Activated B cell treated with CpG ODN at 0.5 μM for 24 hours (primary cell): ENCODE measurements at regions of chr22 and their contacts with region 1.

Region 1: GRCh38 chr22:23838681-23839468 is at the start of gene DERL3:
- DNase-seq: peak; percentile 95
- ATAC-seq: peak; percentile 82
- H3K4me3 Mint-ChIP-seq: peak within 1 kb of the TSS; percentile 88
- H3K27ac Mint-ChIP-seq: peak within 1 kb of the TSS; percentile 95
- H3K4me1 Mint-ChIP-seq: peaks cover 75% of the 10 kb centered on the region
- H3K27me3 Mint-ChIP-seq: no peaks in the 10 kb centered on the region
- CTCF ChIP-seq: no peak
- total RNA-seq, gene DERL3: 15.4 and 18.3 TPM in 2 replicates

Region 2: DNA sequence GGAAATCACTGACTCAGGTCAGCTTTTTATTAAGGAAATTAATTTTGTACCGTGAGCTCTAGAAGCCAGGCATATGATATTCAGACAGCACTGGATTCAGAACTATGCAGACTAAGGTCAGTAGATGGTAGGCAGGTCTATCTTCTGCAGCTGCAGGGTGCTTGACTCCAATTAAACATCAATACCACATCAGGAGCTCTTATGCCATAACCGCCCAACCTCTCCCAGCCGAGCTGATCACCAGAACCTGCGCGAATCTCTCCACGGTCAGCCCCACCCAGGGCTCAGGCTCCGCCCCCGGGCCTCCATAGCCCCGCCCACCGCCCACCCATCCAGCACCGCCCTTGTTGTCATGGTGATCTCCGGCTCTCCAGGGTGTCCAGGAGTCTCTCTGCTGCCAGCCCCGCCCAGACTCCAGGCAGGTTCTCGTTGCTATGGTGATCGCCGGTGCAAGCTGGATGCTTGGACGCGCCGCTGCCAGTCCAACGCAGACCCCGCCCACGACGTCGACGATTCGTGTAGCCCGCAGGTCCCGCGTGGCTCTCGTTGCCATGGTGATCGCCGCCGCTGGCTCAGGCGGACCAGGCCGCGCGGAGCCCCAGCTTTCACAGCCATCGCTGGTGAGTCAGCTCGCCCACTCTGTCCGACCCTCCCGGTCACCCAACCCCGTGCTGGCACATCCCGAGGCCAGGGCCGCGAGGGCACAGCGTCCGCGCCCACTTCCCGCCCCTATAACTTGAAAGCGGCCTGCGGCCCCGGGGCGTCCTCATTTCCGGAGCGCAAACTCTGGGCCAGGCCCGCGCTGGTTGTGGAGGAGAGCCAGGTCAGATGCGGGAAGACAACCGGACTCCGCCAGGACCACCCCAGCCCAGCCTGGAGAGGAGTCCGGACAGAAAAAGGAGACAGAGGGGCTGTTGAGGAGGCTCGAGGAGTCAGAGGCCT is 693.7 kb before region 1 on chr22 and contains the start of gene RAB36:
- CTCF ChIA-PET with region 1: no interaction called
- POLR2A ChIA-PET with region 1: no interaction called
- intact Hi-C with region 1: loop called (anchors 10 kb)
- DNase-seq: peak; percentile 91
- ATAC-seq: peak; percentile 65
- H3K4me3 Mint-ChIP-seq: peak within 1 kb of the TSS; percentile 81
- H3K27ac Mint-ChIP-seq: peak within 1 kb of the TSS; percentile 86
- H3K4me1 Mint-ChIP-seq: peaks cover 56% of the 10 kb centered on the region
- H3K27me3 Mint-ChIP-seq: no peaks in the 10 kb centered on the region
- CTCF ChIP-seq: no peak
- total RNA-seq, gene RAB36: 1.7 and 2.1 TPM in 2 replicates

Region 3: GRCh38 chr22:23750714-23751440 is 88.0 kb before region 1 on chr22 and contains the start of gene ZNF70:
- CTCF ChIA-PET with region 1: no interaction called
- POLR2A ChIA-PET with region 1: interaction called, 14 read pairs
- intact Hi-C with region 1: loop called (anchors 1 kb)
- DNase-seq: peak; percentile 90
- ATAC-seq: peak; percentile 58
- H3K4me3 Mint-ChIP-seq: peak within 1 kb of the TSS; percentile 87
- H3K27ac Mint-ChIP-seq: peak within 1 kb of the TSS; percentile 95
- H3K4me1 Mint-ChIP-seq: peaks cover 62% of the 10 kb centered on the region
- H3K27me3 Mint-ChIP-seq: no peaks in the 10 kb centered on the region
- CTCF ChIP-seq: no peak
- total RNA-seq, gene ZNF70: 4.0 and 4.9 TPM in 2 replicates

Region 4: GRCh38 chr22:23800297-23801237 is 38.3 kb before region 1 on chr22:
- CTCF ChIA-PET with region 1: no interaction called
- POLR2A ChIA-PET with region 1: interaction called, 25 read pairs
- intact Hi-C with region 1: loop called (anchors 1 kb)
- DNase-seq: peak; percentile 68
- ATAC-seq: peak; percentile 77
- H3K4me3 Mint-ChIP-seq: peak overlapping the region; percentile 49
- H3K27ac Mint-ChIP-seq: peak overlapping the region; percentile 97
- H3K4me1 Mint-ChIP-seq: peaks cover 78% of the 10 kb centered on the region
- H3K27me3 Mint-ChIP-seq: no peaks in the 10 kb centered on the region
- CTCF ChIP-seq: no peak

Region 5: DNA sequence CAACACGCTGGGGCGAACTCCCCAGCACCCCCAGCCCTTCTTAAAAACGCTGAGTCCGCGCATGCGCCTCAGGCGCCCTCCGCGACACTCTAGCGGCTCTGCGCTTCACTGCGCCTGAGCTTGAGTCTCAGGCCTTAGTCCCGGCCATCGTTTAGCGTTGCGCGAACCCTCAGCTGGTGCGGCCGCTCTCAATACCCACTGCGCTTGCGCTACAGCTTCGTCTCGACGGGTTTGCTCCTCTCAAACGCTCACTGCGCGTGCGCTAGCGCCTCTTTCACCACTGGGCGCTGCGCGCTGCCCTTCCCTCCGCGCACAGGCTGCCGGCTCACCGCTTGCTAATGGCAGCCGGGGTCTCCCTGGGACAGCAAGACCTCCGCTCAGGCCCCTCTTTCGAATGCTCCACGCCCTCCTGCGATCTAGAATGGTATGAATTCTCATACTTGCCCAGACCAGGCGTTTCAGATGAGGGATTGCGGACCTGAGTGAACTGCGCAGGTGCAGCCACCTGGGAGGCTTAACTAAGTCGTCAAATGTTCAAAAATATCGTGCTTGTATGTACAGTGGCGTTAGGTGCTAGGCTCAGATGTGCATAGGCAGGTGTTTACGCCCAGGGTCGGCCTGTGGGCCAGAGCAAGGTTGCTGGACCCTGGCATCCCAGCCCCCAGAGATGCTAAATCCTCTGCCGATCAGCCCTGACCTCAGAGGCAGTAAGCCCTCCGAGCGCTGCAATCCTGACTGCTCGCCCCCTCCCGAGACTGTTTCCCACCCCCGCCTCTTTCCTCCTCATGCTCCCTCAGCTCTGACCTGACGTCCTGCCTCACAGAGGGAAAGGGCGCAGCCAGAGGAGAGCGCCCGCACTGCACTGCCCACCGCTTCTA is 19.0 kb after region 1 on chr22 and contains the start of gene SLC2A11:
- CTCF ChIA-PET with region 1: no interaction called
- POLR2A ChIA-PET with region 1: interaction called, 14 read pairs
- intact Hi-C with region 1: no loop called
- DNase-seq: peak; percentile 90
- ATAC-seq: peak; percentile 94
- H3K4me3 Mint-ChIP-seq: peak within 1 kb of the TSS; percentile 91
- H3K27ac Mint-ChIP-seq: peak within 1 kb of the TSS; percentile 94
- H3K4me1 Mint-ChIP-seq: peaks cover 22% of the 10 kb centered on the region
- H3K27me3 Mint-ChIP-seq: no peaks in the 10 kb centered on the region
- CTCF ChIP-seq: no peak
- total RNA-seq, gene SLC2A11: 24.0 and 30.2 TPM in 2 replicates

Region 6: GRCh38 chr22:23928187-23928586 is 89.3 kb after region 1 on chr22:
- CTCF ChIA-PET with region 1: no interaction called
- POLR2A ChIA-PET with region 1: no interaction called
- intact Hi-C with region 1: no loop called
- DNase-seq: no peak
- ATAC-seq: no peak
- H3K4me3 Mint-ChIP-seq: no peak overlapping the region
- H3K27ac Mint-ChIP-seq: no peak overlapping the region
- H3K4me1 Mint-ChIP-seq: peaks cover 10% of the 10 kb centered on the region
- H3K27me3 Mint-ChIP-seq: no peaks in the 10 kb centered on the region
- CTCF ChIP-seq: no peak